Activated naive CD4-positive, alpha-beta T cell treated with anti-CD3 and anti-CD28 coated beads for 36 hours (primary cell): ENCODE measurements at regions of chr2 and their contacts with region 1.

Region 1: GRCh38 chr2:172484253-172484652 is 56.9 kb downstream of the ITGA6 start:
- DNase-seq: peak; percentile 37
- H3K4me3 Mint-ChIP-seq: no peak overlapping the region
- H3K27ac Mint-ChIP-seq: no peak overlapping the region
- H3K4me1 Mint-ChIP-seq: peaks cover 52% of the 10 kb centered on the region
- H3K27me3 Mint-ChIP-seq: no peaks in the 10 kb centered on the region

Region 2: DNA sequence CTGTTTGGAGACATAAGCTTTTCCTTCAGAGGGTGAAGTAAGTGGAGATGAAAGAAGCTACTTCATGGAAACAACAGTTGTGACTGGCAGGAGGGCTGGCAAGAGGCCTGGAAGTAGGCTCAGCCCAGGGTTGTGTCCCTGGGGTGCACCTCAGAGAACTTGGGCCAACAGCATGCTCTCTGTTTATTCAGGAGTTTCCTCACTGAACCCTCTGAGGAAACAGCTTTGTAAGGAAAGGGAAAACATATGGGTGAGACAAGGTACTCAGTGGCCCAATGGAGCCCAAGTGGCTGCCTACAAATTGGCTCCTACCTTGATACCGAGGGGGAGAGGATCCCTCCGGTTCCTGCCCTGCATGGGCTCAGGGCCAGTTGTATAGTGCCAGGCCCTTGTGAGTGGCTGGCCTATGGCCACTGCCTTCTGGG is 172.3 kb before region 1 on chr2:
- CTCF ChIA-PET with region 1: no interaction called
- intact Hi-C with region 1: no loop called
- DNase-seq: no peak
- H3K4me3 Mint-ChIP-seq: no peak overlapping the region
- H3K27ac Mint-ChIP-seq: no peak overlapping the region
- H3K4me1 Mint-ChIP-seq: no peaks in the 10 kb centered on the region
- H3K27me3 Mint-ChIP-seq: no peaks in the 10 kb centered on the region

Region 3: DNA sequence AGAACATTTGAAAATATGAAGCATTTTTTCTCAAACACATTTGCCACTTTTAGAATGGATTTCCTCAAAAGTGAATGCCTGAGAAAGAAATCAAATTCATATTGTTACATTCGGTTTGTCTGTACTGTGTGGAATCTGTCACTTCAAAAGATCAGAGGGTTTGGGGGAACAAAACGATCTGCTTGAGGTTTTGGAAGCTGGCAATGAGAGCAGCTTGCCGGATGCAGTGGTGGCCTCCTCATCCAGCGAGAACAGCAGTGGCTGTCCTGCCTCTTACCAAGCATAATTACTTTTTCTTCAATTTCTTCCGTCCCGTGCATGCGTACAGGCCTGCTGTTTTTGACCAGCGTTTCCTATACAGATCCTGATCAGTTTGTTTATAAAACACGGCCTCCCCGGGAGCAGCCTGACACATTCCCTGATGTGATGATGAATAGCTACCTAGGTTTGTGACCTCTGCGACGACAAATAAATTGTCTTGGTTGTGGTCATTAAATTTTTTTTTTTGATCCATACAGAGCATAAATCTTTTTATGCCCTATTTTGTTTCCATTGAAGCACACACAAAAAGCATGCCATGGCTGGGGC is 11.7 kb before region 1 on chr2:
- CTCF ChIA-PET with region 1: interaction called, 87 read pairs
- intact Hi-C with region 1: loop called (anchors 1 kb)
- DNase-seq: peak; percentile 70
- H3K4me3 Mint-ChIP-seq: peak overlapping the region; percentile 30
- H3K27ac Mint-ChIP-seq: peak overlapping the region; percentile 80
- H3K4me1 Mint-ChIP-seq: peaks cover 52% of the 10 kb centered on the region
- H3K27me3 Mint-ChIP-seq: no peaks in the 10 kb centered on the region

Region 4: GRCh38 chr2:172496160-172496608 is 11.9 kb after region 1 on chr2:
- CTCF ChIA-PET with region 1: interaction called, 32 read pairs
- intact Hi-C with region 1: no loop called
- DNase-seq: peak; percentile 61
- H3K4me3 Mint-ChIP-seq: peak overlapping the region; percentile 38
- H3K27ac Mint-ChIP-seq: peak overlapping the region; percentile 91
- H3K4me1 Mint-ChIP-seq: peaks cover 73% of the 10 kb centered on the region
- H3K27me3 Mint-ChIP-seq: no peaks in the 10 kb centered on the region

Region 5: GRCh38 chr2:172623249-172623965 is 139.2 kb after region 1 on chr2:
- CTCF ChIA-PET with region 1: no interaction called
- intact Hi-C with region 1: no loop called
- DNase-seq: no peak
- H3K4me3 Mint-ChIP-seq: no peak overlapping the region
- H3K27ac Mint-ChIP-seq: no peak overlapping the region
- H3K4me1 Mint-ChIP-seq: no peaks in the 10 kb centered on the region
- H3K27me3 Mint-ChIP-seq: no peaks in the 10 kb centered on the region

Region 6: DNA sequence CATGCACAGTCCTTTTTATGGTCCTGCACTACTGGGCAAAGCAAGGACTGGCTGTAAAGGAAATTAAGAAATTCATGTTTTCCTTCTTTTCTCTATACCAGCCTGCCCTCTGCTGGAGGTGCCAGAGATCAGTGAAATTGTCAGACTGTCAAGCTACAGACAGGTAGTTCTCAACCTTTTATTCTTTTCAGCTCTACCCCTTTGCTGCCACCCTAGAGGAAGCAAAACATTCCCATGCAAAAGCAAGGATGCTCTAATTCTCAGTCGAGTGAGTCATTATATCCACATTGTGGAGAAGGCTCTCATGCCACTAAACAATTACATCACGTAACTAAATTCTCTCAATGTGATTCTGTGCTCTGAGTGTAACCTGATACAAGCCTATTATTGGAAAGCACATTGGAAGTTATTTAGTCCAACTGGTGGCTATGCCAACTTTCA is 226.4 kb after region 1 on chr2:
- CTCF ChIA-PET with region 1: interaction called, 3 read pairs
- intact Hi-C with region 1: loop called (anchors 2 kb)
- DNase-seq: peak; percentile 69
- H3K4me3 Mint-ChIP-seq: no peak overlapping the region
- H3K27ac Mint-ChIP-seq: no peak overlapping the region
- H3K4me1 Mint-ChIP-seq: no peaks in the 10 kb centered on the region
- H3K27me3 Mint-ChIP-seq: no peaks in the 10 kb centered on the region

Region 7: GRCh38 chr2:172938713-172939375 is 454.6 kb after region 1 on chr2:
- CTCF ChIA-PET with region 1: no interaction called
- intact Hi-C with region 1: no loop called
- DNase-seq: no peak
- H3K4me3 Mint-ChIP-seq: no peak overlapping the region
- H3K27ac Mint-ChIP-seq: no peak overlapping the region
- H3K4me1 Mint-ChIP-seq: peaks cover 10% of the 10 kb centered on the region
- H3K27me3 Mint-ChIP-seq: no peaks in the 10 kb centered on the region